Heart left ventricle (tissue), 16 donors: ENCODE measurements at regions of chr6 and their contacts with region 1.

Region 1: DNA sequence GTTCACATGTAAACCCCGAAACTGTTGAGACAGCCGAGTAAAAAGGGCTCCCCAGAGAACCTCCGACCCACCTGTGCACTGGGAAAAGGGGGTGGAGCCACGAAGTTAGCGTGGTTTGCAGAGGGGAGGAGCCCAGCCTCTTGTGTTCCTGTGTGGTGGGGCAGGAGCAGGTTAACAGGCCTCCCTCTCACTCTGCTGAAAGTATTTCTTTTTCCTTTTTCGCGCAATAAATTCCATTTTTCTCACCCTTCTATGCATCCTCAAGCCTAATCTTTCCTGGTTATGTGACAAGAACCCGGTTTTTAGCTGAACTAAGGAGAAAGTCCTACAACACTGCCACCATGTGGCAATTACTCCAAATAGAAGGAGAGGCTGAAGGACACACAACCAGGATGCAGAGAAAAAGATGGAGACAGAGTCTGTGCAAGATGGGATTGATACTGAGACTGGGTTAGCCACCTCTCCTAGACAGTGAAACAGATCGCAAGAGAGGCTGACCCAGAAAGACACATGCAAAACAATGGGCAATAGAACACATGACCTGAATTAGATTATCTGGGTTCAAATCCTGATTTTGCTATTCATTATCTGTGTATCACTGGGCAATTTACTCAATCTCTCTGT is 168.7 kb upstream of the PRSS16 start:
- DNase-seq: peak in 1 of 5 donors; percentile 18
- ATAC-seq: peak in 2 of 4 donors; percentile 66 to 68
- H3K4me3 ChIP-seq: peak overlapping the region in 1 of 12 donors; percentile 8
- H3K27ac ChIP-seq: no peak overlapping the region
- H3K4me1 ChIP-seq: peaks cover 0 to 4% (median 0%) of the 10 kb centered on the region in 12 donors
- H3K27me3 ChIP-seq: peaks cover 0 to 69% (median 17%) of the 10 kb centered on the region in 9 donors
- CTCF ChIP-seq: peak; percentile 42 to 71 (median 58)
- POLR2A ChIP-seq: no peak

Region 2: GRCh38 chr6:26607434-26608230 is 471.2 kb before region 1 on chr6:
- intact Hi-C with region 1: loop called (anchors 1 to 5 kb)
- DNase-seq: no peak
- ATAC-seq: peak in 3 of 4 donors; percentile 49 to 78 (median 73)
- H3K4me3 ChIP-seq: peak overlapping the region in 4 of 12 donors; percentile 23 to 39 (median 36)
- H3K27ac ChIP-seq: no peak overlapping the region
- H3K4me1 ChIP-seq: no peaks in the 10 kb centered on the region
- H3K27me3 ChIP-seq: peaks cover 0 to 15% (median 2%) of the 10 kb centered on the region in 9 donors
- CTCF ChIP-seq: peak; percentile 46 to 70 (median 62)
- POLR2A ChIP-seq: no peak